ENCODE measurements at regions of chr9 and their contacts with region 1.

Region 1: DNA sequence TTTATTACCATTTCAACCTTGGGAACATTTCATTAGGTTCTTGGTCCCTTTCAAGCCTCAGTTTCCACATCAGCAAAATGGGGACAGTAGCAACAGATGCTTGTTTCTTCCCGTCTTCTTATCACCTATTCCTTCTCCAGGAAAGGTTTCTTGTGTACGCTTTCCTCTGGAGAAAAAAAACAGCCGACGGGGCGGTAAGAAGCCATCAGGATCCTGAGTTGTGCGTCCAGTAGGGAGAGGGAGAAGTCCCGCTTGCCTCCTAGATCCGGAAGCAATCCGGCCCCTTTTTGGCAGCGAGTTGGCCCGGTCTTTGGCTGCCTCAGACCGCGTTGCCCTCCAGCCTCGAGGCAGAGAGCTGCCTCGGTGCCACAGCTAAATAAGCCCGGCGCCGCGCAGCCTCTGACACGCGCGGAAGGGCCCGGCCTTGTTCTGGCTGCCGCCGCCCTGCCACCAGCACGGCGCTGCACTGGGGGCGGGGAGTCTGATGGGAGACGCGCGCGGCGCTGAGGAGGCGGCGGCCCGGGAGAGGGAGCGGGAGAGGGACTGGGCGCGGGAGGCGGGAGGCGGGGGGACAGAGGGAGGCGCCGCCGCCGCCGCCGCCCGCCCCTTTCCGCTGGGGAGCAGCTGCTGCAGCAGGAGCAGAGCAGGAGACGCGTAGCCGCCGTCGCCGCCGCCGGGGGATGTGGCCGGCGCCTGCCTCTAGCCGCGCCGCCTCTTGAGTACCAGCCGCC is at the start of gene SLC44A1:
- DNase-seq: peak; percentile 84 to 96 (median 93)
- ATAC-seq: peak; percentile 86
- H3K4me3 ChIP-seq: peak within 1 kb of the TSS; percentile 73
- H3K4me3 Mint-ChIP-seq: peak within 1 kb of the TSS; percentile 93
- H3K27ac ChIP-seq: peak within 1 kb of the TSS; percentile 57 to 78
- H3K27ac Mint-ChIP-seq: peak within 1 kb of the TSS; percentile 94
- H3K4me1 ChIP-seq: peaks cover 15% of the 10 kb centered on the region
- H3K4me1 Mint-ChIP-seq: peaks cover 45% of the 10 kb centered on the region
- H3K27me3 ChIP-seq: peaks cover 0 to 6% of the 10 kb centered on the region in 2 experiments
- H3K27me3 Mint-ChIP-seq: peaks cover 26% of the 10 kb centered on the region
- CTCF ChIP-seq: no peak
- total RNA-seq, gene SLC44A1: 5.1 to 5.9 TPM

Region 2: GRCh38 chr9:104747558-104748358 is 496.4 kb before region 1 on chr9 and contains the start of gene NIPSNAP3A:
- CTCF ChIA-PET with region 1: no interaction called
- POLR2A ChIA-PET with region 1: interaction called, 21 read pairs
- intact Hi-C with region 1: loop called in 1 of 2 experiments (anchors 5 kb)
- DNase-seq: peak; percentile 77 to 94 (median 84)
- ATAC-seq: peak; percentile 86
- H3K4me3 ChIP-seq: peak within 1 kb of the TSS; percentile 88
- H3K4me3 Mint-ChIP-seq: peak within 1 kb of the TSS; percentile 96
- H3K27ac ChIP-seq: peak within 1 kb of the TSS; percentile 74 to 89
- H3K27ac Mint-ChIP-seq: peak within 1 kb of the TSS; percentile 96
- H3K4me1 ChIP-seq: peaks cover 17% of the 10 kb centered on the region
- H3K4me1 Mint-ChIP-seq: peaks cover 24% of the 10 kb centered on the region
- H3K27me3 ChIP-seq: no peaks in the 10 kb centered on the region
- H3K27me3 Mint-ChIP-seq: no peaks in the 10 kb centered on the region
- CTCF ChIP-seq: no peak
- total RNA-seq, gene NIPSNAP3A: 9.0 to 10.6 TPM

Region 3: GRCh38 chr9:104841601-104842141 is 402.5 kb before region 1 on chr9:
- CTCF ChIA-PET with region 1: no interaction called
- POLR2A ChIA-PET with region 1: no interaction called
- intact Hi-C with region 1: no loop called
- DNase-seq: no peak
- ATAC-seq: no peak
- H3K4me3 ChIP-seq: no peak overlapping the region
- H3K4me3 Mint-ChIP-seq: no peak overlapping the region
- H3K27ac ChIP-seq: no peak overlapping the region
- H3K27ac Mint-ChIP-seq: no peak overlapping the region
- H3K4me1 ChIP-seq: peaks cover 3% of the 10 kb centered on the region
- H3K4me1 Mint-ChIP-seq: peaks cover 9% of the 10 kb centered on the region
- H3K27me3 ChIP-seq: no peaks in the 10 kb centered on the region
- H3K27me3 Mint-ChIP-seq: no peaks in the 10 kb centered on the region
- CTCF ChIP-seq: no peak

Region 4: GRCh38 chr9:104968025-104968982 is 275.9 kb before region 1 on chr9:
- CTCF ChIA-PET with region 1: no interaction called
- POLR2A ChIA-PET with region 1: interaction called, 5 read pairs
- intact Hi-C with region 1: loop called in 1 of 2 experiments (anchors 5 kb)
- DNase-seq: peak; percentile 80 to 92 (median 86)
- ATAC-seq: peak; percentile 97
- H3K4me3 ChIP-seq: peak overlapping the region; percentile 75
- H3K4me3 Mint-ChIP-seq: peak overlapping the region; percentile 95
- H3K27ac ChIP-seq: no peak overlapping the region
- H3K27ac Mint-ChIP-seq: peak overlapping the region; percentile 77
- H3K4me1 ChIP-seq: peaks cover 14% of the 10 kb centered on the region
- H3K4me1 Mint-ChIP-seq: peaks cover 27% of the 10 kb centered on the region
- H3K27me3 ChIP-seq: no peaks in the 10 kb centered on the region
- H3K27me3 Mint-ChIP-seq: peaks cover 8% of the 10 kb centered on the region
- CTCF ChIP-seq: no peak

Region 5: DNA sequence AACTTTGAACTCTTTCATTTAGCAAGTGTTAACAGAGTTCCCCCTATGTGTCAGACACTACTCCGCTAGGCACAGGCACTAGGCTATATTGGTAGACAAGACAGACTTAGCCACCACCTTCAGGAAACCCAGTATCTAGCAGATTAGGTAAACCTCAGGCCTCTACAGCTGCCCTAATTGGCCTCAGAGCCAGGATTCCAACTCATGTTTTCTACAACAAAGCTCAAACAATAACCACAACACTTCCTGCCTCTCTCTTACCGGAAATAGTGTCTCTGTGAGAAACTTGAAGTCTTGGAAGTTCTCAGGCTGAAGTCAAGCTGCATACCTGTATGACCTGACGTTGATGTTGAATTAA is 116.3 kb before region 1 on chr9:
- CTCF ChIA-PET with region 1: interaction called, 5 read pairs
- POLR2A ChIA-PET with region 1: interaction called, 9 read pairs
- intact Hi-C with region 1: loop called (anchors 1 to 5 kb)
- DNase-seq: peak; percentile 30 to 92 (median 46)
- ATAC-seq: peak; percentile 99
- H3K4me3 ChIP-seq: peak overlapping the region; percentile 3
- H3K4me3 Mint-ChIP-seq: peak overlapping the region; percentile 31
- H3K27ac ChIP-seq: no peak overlapping the region
- H3K27ac Mint-ChIP-seq: peak overlapping the region; percentile 73
- H3K4me1 ChIP-seq: peaks cover 55% of the 10 kb centered on the region
- H3K4me1 Mint-ChIP-seq: peaks cover 65% of the 10 kb centered on the region
- H3K27me3 ChIP-seq: no peaks in the 10 kb centered on the region
- H3K27me3 Mint-ChIP-seq: no peaks in the 10 kb centered on the region
- CTCF ChIP-seq: no peak

Region 6: DNA sequence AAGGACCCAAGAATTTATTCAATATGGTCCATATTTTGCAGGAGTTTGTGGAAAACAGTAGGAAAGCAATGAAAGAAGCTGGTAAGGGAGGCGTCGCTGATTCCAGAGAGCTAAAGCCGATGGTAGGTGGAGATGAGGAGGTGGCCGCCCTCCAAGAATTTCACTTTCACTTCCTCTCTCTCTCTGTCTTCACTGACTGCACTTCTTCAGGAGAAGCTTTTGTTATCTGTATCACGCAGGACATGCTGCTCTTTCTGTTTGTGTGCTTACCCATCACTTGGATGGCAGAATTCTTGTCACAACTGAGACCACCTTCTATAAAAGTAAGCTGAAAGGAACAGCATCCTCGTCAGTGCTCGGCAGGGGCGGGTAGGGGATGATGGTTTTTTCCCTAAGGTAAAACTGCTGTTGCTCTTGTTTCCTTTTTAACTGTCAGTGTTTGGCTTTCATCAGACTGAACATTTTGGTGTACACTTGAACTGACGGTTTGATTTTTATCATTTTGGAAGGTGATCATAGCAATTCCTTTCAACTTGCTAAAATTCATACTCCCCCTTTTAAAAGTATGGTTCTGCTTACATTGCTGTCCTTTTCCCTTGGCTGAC is 141.3 kb after region 1 on chr9:
- CTCF ChIA-PET with region 1: no interaction called
- POLR2A ChIA-PET with region 1: interaction called, 19 read pairs
- intact Hi-C with region 1: no loop called
- DNase-seq: peak in 11 of 14 experiments; percentile 1 to 57 (median 22)
- ATAC-seq: peak; percentile 95
- H3K4me3 ChIP-seq: peak overlapping the region; percentile 56
- H3K4me3 Mint-ChIP-seq: peak overlapping the region; percentile 96
- H3K27ac ChIP-seq: no peak overlapping the region
- H3K27ac Mint-ChIP-seq: peak overlapping the region; percentile 88
- H3K4me1 ChIP-seq: no peaks in the 10 kb centered on the region
- H3K4me1 Mint-ChIP-seq: peaks cover 16% of the 10 kb centered on the region
- H3K27me3 ChIP-seq: no peaks in the 10 kb centered on the region
- H3K27me3 Mint-ChIP-seq: no peaks in the 10 kb centered on the region
- CTCF ChIP-seq: no peak

Region 7: DNA sequence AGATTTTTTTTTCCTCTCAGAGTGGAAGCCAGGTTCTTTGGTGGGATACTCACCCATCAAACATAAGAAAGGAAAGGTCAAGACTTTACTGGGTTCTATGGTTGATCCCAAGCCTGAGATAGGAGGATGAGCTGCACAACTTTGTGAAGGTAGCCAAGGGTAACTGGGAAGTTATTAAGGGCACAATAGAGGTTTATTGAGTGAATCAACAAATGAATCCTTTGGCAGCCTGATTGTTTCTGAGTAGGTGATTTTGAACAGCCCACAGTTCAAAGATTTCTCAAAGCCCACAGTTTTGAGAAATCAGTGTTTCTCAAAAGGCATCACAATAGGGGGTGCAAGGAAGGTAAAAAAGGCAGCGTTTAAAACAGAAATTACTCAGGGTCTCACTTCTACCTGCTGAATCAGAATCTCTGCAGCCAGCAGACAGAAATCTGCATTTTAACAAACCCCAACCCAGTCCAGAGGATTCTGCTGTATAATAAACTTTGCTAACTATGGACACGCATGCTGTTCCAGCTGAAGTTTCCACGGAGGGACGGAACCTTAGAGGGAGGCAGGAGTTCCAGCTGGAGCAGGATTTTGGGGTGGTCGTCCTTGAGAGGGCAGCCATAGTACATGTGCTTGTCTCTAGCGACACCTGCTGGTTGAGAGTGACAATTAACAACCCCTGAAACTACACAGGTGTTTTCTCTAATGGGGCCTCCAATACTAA is 170.9 kb after region 1 on chr9:
- CTCF ChIA-PET with region 1: interaction called, 3 read pairs
- POLR2A ChIA-PET with region 1: no interaction called
- intact Hi-C with region 1: loop called (anchors 1 to 5 kb)
- DNase-seq: peak; percentile 19 to 84 (median 48)
- ATAC-seq: peak; percentile 86
- H3K4me3 ChIP-seq: no peak overlapping the region
- H3K4me3 Mint-ChIP-seq: no peak overlapping the region
- H3K27ac ChIP-seq: no peak overlapping the region
- H3K27ac Mint-ChIP-seq: no peak overlapping the region
- H3K4me1 ChIP-seq: peaks cover 3% of the 10 kb centered on the region
- H3K4me1 Mint-ChIP-seq: peaks cover 4% of the 10 kb centered on the region
- H3K27me3 ChIP-seq: peaks cover 9 to 19% of the 10 kb centered on the region in 2 experiments
- H3K27me3 Mint-ChIP-seq: peaks cover 51% of the 10 kb centered on the region
- CTCF ChIP-seq: peak; percentile 94

Region 8: DNA sequence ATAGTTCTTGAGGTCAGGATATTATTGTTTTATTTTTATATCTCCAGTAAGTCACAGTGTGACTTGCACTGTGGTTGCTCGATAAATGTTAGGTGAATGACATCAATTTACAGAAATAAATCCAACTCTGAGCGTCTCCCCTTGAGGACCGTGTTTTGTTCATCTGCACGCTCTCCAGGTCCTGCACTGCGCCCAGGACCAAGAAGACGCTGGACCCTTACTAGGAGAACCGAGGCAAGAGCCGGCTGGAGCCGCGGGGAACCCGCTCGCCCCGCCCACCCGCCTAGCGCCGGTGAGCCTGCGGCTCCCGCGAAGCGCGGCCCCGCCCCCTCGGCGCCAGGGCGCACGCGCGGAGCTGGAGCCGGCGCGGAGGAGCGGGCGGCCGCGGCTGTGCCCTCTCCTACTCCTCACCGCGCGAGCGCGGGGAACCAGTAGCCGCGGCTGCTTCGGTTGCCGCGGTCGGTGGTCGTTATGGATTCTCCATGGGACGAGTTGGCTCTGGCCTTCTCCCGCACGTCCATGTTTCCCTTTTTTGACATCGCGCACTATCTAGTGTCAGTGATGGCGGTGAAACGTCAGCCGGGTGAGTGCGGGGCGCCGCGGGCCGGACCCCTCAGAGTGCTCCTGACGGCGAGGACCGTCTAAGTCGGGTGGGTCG is 450.2 kb after region 1 on chr9 and contains the start of gene TMEM38B:
- CTCF ChIA-PET with region 1: no interaction called
- POLR2A ChIA-PET with region 1: interaction called, 3 read pairs
- intact Hi-C with region 1: loop called in 1 of 2 experiments (anchors 5 kb)
- DNase-seq: peak; percentile 50 to 93 (median 74)
- ATAC-seq: peak; percentile 86
- H3K4me3 ChIP-seq: peak within 1 kb of the TSS; percentile 86
- H3K4me3 Mint-ChIP-seq: peak within 1 kb of the TSS; percentile 93
- H3K27ac ChIP-seq: peak within 1 kb of the TSS in 1 of 2 donors; percentile 22
- H3K27ac Mint-ChIP-seq: peak within 1 kb of the TSS; percentile 73
- H3K4me1 ChIP-seq: peaks cover 7% of the 10 kb centered on the region
- H3K4me1 Mint-ChIP-seq: peaks cover 40% of the 10 kb centered on the region
- H3K27me3 ChIP-seq: peaks cover 9 to 24% of the 10 kb centered on the region in 2 experiments
- H3K27me3 Mint-ChIP-seq: peaks cover 30% of the 10 kb centered on the region
- CTCF ChIP-seq: no peak
- total RNA-seq, gene TMEM38B: 12.9 to 13.9 TPM